Ovary (tissue), 10 donors: ENCODE measurements at regions of chr1 and their contacts with region 1.

Region 1: GRCh38 chr1:155244368-155245162 is 10.7 kb downstream of the ENTREP3 start:
- DNase-seq: peak; percentile 95 to 99 (median 97)
- H3K4me3 ChIP-seq: peak overlapping the region; percentile 52
- H3K27ac ChIP-seq: peak overlapping the region; percentile 36 to 85
- H3K4me1 ChIP-seq: peaks cover 2% of the 10 kb centered on the region
- H3K27me3 ChIP-seq: no peaks in the 10 kb centered on the region
- CTCF ChIP-seq: peak in 2 of 3 donors; percentile 99
- EP300 ChIP-seq: peak; percentile 77
- POLR2A ChIP-seq: peak; percentile 90

Region 2: GRCh38 chr1:155208541-155209311 is 35.8 kb before region 1 on chr1 and contains the start of gene MTX1:
- intact Hi-C with region 1: loop called in 1 of 4 experiments (anchors 5 kb)
- DNase-seq: peak; percentile 92 to 97 (median 95)
- H3K4me3 ChIP-seq: peak within 1 kb of the TSS; percentile 59
- H3K27ac ChIP-seq: peak within 1 kb of the TSS; percentile 97 to 100
- H3K4me1 ChIP-seq: peaks cover 8% of the 10 kb centered on the region
- H3K27me3 ChIP-seq: no peaks in the 10 kb centered on the region
- CTCF ChIP-seq: peak in 2 of 3 donors; percentile 19 to 29
- EP300 ChIP-seq: peak; percentile 25
- POLR2A ChIP-seq: peak; percentile 75
- total RNA-seq, gene MTX1: 18.5 to 33.4 (median 27.7) TPM